IMR-90 (cell line): ENCODE measurements at regions of chr11 and their contacts with region 1.

Region 1: DNA sequence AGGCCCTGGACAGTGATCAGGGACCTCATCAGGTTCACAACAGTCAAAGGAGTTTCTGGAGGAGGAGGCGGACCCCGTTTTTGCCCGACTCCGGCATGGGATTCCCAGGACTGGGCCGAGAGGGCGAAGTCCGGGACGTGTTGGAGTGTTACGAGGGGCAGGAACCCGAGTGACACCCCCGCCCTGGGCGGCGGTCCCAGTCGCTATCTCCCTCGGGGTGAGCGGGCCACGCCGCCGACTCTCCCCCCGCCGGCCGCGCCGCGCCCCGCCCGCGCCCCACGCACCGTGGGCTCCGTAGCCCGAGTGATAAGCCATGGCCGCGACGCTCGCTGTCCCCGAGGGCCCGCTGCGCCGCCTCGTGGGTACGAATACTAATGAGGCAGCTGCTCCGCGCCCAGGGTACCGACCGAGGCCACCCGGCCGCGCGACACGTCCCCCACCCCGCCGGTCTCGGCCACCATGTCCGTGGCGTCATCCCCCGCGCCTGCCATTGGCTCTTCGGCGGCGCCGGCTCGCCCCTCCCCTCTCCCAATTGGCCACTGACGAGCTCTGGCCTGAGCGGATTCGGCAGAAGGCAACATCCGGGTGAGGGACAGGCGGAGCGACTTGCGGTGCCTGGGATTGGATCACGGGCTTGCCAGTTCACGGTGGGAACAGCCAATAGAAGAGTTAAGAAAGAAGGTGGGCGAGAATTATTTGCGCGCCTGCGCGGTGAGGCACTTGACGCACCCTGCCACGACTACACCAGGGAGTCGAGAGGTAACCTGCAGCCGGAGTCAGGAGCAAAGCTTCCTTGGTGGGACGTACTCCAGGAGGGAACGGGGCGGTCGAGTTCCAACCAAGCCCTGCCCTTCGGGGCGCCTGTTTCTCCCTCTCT is at the start of gene YIF1A:
- DNase-seq: peak; percentile 100
- ATAC-seq: peak; percentile 95
- H3K4me3 ChIP-seq: peak within 1 kb of the TSS; percentile 69
- H3K27ac ChIP-seq: peak within 1 kb of the TSS; percentile 86
- H3K4me1 ChIP-seq: peaks cover 11% of the 10 kb centered on the region
- H3K27me3 ChIP-seq: peaks cover 29% of the 10 kb centered on the region
- CTCF ChIP-seq: no peak
- POLR2A ChIP-seq: peak; percentile 97
- RAD21 ChIP-seq: no peak
- total RNA-seq, gene YIF1A: 128 and 134 TPM in 2 replicates

Region 2: GRCh38 chr11:66126808-66127555 is 161.9 kb before region 1 on chr11:
- CTCF ChIA-PET with region 1: no interaction called
- POLR2A ChIA-PET with region 1: no interaction called
- dilution Hi-C with region 1: no loop called
- in situ Hi-C with region 1: no loop called
- intact Hi-C with region 1: no loop called
- DNase-seq: peak; percentile 79
- ATAC-seq: peak; percentile 90
- H3K4me3 ChIP-seq: no peak overlapping the region
- H3K27ac ChIP-seq: peak overlapping the region; percentile 17
- H3K4me1 ChIP-seq: peaks cover 14% of the 10 kb centered on the region
- H3K27me3 ChIP-seq: no peaks in the 10 kb centered on the region
- CTCF ChIP-seq: no peak
- POLR2A ChIP-seq: no peak
- RAD21 ChIP-seq: peak; percentile 12; the same call in 1 of the 2 replicates

Region 3: GRCh38 chr11:66328307-66329144 is 39.6 kb after region 1 on chr11:
- CTCF ChIA-PET with region 1: no interaction called
- POLR2A ChIA-PET with region 1: interaction called, 3 read pairs
- dilution Hi-C with region 1: no loop called
- in situ Hi-C with region 1: no loop called
- intact Hi-C with region 1: loop called (anchors 1 kb)
- DNase-seq: peak; percentile 70
- ATAC-seq: peak; percentile 73
- H3K4me3 ChIP-seq: no peak overlapping the region
- H3K27ac ChIP-seq: peak overlapping the region; percentile 95
- H3K4me1 ChIP-seq: peaks cover 43% of the 10 kb centered on the region
- H3K27me3 ChIP-seq: no peaks in the 10 kb centered on the region
- CTCF ChIP-seq: peak; percentile 92
- POLR2A ChIP-seq: peak; percentile 40
- RAD21 ChIP-seq: peak; percentile 84